ENCODE measurements at regions of chr17 and their contacts with region 1.

Region 1: DNA sequence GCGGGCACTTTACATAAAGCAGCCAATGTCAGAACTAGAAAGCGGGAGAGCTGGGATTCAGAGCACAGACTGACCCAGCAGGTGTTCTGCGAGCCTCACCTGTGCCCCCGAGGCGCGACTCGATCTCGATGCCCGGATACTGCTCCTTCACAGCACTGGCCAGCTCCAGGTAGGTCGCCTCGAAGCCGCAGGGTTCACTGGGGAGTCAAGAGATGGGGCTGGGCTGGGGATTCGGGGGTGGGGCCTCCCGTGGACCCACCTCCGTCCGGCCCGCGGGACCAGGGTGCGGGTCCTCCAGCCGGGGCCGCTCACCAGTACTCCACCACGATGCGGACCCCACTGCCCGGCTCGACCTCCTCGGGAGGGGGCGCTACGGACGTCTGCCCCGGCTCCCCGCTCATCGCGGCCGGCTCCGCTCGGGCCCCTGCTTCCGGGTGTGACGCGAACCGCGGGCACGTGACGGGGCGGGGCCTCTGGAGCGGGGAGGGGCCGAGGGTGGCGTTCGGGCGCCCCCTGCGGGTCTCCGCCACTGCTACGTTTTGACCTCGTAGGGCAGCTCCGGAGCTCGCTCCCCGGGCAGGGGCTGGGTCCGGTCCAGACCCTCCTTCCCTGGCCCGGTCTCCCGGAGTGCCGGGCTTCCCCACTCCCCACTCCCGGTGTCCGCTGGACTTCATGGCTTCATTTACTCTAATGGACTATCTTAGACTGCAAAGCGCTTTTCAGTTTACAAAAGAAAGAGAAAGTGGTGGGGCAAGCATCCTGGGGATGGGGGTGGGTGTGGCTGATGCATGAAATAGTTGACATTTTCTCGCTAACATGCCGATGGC is at the start of gene MIEN1:
- DNase-seq: peak; percentile 80 to 86 (median 85)
- H3K4me3 ChIP-seq: peak within 1 kb of the TSS; percentile 59 to 93 (median 81)
- H3K27ac ChIP-seq: peak within 1 kb of the TSS; percentile 85 to 86
- H3K4me1 ChIP-seq: peaks cover 5 to 13% (median 8%) of the 10 kb centered on the region in 4 experiments
- H3K27me3 ChIP-seq: peaks cover 0 to 4% (median 2%) of the 10 kb centered on the region in 5 experiments

Region 2: GRCh38 chr17:39668199-39668966 is 61.9 kb before region 1 on chr17 and contains the start of gene PNMT:
- CTCF ChIA-PET with region 1: interaction called, 20 read pairs
- POLR2A ChIA-PET with region 1: interaction called, 4 read pairs
- DNase-seq: peak; percentile 68 to 80 (median 75)
- H3K4me3 ChIP-seq: peak within 1 kb of the TSS in 5 of 7 experiments; percentile 17 to 63 (median 41)
- H3K27ac ChIP-seq: peak within 1 kb of the TSS in 1 of 2 experiments; percentile 43
- H3K4me1 ChIP-seq: peaks cover 0 to 56% (median 31%) of the 10 kb centered on the region in 4 experiments
- H3K27me3 ChIP-seq: peaks cover 0 to 31% (median 11%) of the 10 kb centered on the region in 5 experiments

Region 3: GRCh38 chr17:39719563-39720355 is 10.5 kb before region 1 on chr17:
- CTCF ChIA-PET with region 1: interaction called, 16 read pairs
- POLR2A ChIA-PET with region 1: interaction called, 3 read pairs
- DNase-seq: no peak
- H3K4me3 ChIP-seq: no peak overlapping the region
- H3K27ac ChIP-seq: no peak overlapping the region
- H3K4me1 ChIP-seq: no peaks in the 10 kb centered on the region
- H3K27me3 ChIP-seq: no peaks in the 10 kb centered on the region

Region 4: DNA sequence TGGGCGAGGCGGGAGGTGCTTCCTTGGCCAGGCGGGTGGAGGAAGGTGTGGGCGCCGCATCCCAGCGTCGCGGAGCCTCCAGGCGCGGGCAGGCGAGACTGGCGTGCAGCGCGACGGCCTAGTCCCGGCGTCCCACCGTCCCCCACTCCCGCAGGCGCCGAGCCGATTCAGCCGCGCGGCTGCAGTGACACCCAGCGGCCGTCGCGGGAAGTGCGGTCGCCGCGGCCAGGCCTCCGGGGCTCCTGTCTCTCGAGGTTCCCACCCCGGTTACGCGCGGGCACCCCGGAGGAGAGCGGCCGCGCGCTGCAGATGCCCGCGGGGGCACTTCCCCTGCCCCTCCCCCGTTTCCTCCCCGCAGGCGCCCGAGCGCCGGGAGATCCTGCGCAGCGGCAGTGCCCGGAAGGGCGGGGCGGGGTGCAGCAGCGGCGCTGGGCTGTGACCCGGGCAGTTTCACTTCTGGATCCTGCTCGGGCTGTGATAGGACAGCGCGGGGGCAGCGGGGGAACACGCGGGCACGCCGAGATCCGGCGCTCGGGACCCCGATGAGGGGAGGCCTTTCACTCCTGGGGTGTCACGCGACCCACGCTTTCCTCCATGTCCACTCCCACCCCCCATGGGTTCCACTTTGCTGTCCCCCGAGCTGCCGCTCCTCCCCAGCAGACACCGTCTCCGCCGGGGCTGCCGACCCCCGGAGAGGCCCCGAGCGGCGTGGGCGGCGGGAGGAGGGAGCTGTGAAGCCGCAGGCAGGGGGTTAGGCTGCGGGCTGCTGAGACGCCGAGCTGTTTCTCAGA is 24.0 kb after region 1 on chr17:
- CTCF ChIA-PET with region 1: interaction called, 12 read pairs
- POLR2A ChIA-PET with region 1: interaction called, 3 read pairs
- DNase-seq: peak; percentile 84 to 95 (median 92)
- H3K4me3 ChIP-seq: peak overlapping the region; percentile 36 to 74 (median 63)
- H3K27ac ChIP-seq: peak overlapping the region; percentile 7 to 58
- H3K4me1 ChIP-seq: peaks cover 9 to 52% (median 45%) of the 10 kb centered on the region in 4 experiments
- H3K27me3 ChIP-seq: peaks cover 0 to 3% (median 0%) of the 10 kb centered on the region in 5 experiments

Measured in common myeloid progenitor, CD34-positive (primary cell).